AG04449 (cell line): ENCODE measurements at regions of chr2 and their contacts with region 1.

Region 1: DNA sequence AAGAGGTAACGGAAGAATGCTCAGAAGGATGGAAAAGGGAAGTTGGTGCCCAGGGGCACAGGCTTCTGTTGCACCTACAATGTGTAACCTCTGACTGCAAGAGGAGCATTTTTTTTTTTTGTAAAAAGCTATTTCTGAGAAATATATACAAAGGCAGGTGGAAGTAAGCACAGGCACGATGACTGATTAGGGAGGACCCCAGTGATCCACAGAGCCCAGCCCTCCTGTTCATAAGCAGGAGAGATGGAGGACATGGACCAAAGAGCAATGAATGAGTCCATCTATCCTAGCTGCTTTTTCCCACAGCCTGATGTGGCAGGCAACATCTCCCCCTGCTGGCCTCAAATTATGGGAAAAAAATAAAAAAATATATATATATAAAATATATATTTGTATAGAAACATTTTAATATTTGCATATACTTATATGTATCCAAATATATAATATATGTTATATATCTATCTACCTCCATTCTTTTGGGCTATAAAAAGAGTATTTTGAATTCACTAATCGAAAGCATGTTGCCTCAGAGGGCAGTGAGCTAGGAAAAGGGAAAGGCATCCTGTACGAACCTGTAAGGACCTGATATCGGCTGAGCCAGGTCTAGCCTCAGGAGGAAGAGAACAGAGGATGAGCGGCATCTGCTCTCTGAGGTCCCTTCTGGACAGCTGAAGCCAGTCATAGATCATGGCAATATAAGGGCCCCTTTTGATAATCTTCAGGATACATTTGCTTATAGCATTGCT is 166.0 kb upstream of the STK17B start:
- DNase-seq: no peak
- H3K4me3 ChIP-seq: no peak overlapping the region
- CTCF ChIP-seq: peak; percentile 39

Region 2: GRCh38 chr2:196076778-196077568 is 260.4 kb before region 1 on chr2:
- CTCF ChIA-PET with region 1: interaction called, 151 read pairs
- POLR2A ChIA-PET with region 1: no interaction called
- DNase-seq: no peak
- H3K4me3 ChIP-seq: no peak overlapping the region
- CTCF ChIP-seq: no peak

Region 3: DNA sequence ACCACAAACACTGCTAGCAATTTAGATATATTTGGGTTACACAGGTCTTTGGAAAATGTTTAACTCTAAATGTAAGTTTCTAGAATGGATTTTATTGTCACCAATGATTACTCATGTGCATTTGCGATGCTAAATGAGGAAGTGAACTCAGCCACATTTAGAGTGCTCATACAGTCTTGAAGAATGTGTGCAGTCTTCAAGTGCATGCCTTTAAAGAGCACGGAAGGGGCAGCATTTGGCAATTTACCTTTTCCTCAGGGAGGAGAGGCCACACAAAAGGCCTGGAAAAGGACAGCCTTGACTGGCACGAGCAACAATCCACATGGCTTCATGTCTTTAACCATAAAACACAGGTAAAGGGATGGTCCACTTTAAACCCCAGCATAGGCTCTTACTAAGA is 87.5 kb before region 1 on chr2:
- CTCF ChIA-PET with region 1: interaction called, 11 read pairs
- POLR2A ChIA-PET with region 1: no interaction called
- DNase-seq: no peak
- H3K4me3 ChIP-seq: no peak overlapping the region
- CTCF ChIP-seq: no peak

Region 4: GRCh38 chr2:196291873-196292800 is 45.2 kb before region 1 on chr2:
- CTCF ChIA-PET with region 1: interaction called, 75 read pairs
- POLR2A ChIA-PET with region 1: no interaction called
- DNase-seq: no peak
- H3K4me3 ChIP-seq: no peak overlapping the region
- CTCF ChIP-seq: no peak

Region 5: GRCh38 chr2:196314780-196315179 is 22.6 kb before region 1 on chr2:
- CTCF ChIA-PET with region 1: interaction called, 39 read pairs
- POLR2A ChIA-PET with region 1: no interaction called
- DNase-seq: no peak
- H3K4me3 ChIP-seq: no peak overlapping the region
- CTCF ChIP-seq: no peak

Region 6: DNA sequence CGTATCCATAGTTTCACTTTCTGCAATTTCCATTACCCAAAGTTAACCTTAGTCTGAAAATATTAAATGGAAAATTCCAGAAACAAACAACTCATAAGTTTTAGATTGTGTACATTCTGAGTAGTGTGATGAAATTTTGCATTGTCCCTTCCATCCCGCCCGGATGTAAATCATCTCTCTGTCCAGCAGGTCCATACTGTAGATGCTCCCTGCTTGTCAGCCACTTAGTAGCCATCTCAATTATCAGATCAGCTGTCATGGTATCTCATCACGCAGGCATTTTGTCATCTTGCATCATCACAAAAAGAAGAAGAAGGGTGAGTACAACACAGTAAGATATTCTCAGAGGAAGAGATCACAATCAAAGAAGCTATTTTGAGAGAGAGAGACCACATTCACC is 19.0 kb after region 1 on chr2:
- CTCF ChIA-PET with region 1: interaction called, 75 read pairs
- POLR2A ChIA-PET with region 1: no interaction called
- DNase-seq: no peak
- H3K4me3 ChIP-seq: no peak overlapping the region
- CTCF ChIP-seq: no peak

Region 7: GRCh38 chr2:196413821-196414274 is 76.5 kb after region 1 on chr2:
- CTCF ChIA-PET with region 1: no interaction called
- POLR2A ChIA-PET with region 1: no interaction called
- DNase-seq: no peak
- H3K4me3 ChIP-seq: no peak overlapping the region
- CTCF ChIP-seq: no peak